Activated CD4-positive, alpha-beta T cell treated with anti-CD3 and anti-CD28 coated beads, Interleukin-2, amount 10 ng/mL, durations not matched to agents 24 days and 14 days (primary cell): ENCODE measurements at regions of chr18 and their contacts with region 1.

Region 1: DNA sequence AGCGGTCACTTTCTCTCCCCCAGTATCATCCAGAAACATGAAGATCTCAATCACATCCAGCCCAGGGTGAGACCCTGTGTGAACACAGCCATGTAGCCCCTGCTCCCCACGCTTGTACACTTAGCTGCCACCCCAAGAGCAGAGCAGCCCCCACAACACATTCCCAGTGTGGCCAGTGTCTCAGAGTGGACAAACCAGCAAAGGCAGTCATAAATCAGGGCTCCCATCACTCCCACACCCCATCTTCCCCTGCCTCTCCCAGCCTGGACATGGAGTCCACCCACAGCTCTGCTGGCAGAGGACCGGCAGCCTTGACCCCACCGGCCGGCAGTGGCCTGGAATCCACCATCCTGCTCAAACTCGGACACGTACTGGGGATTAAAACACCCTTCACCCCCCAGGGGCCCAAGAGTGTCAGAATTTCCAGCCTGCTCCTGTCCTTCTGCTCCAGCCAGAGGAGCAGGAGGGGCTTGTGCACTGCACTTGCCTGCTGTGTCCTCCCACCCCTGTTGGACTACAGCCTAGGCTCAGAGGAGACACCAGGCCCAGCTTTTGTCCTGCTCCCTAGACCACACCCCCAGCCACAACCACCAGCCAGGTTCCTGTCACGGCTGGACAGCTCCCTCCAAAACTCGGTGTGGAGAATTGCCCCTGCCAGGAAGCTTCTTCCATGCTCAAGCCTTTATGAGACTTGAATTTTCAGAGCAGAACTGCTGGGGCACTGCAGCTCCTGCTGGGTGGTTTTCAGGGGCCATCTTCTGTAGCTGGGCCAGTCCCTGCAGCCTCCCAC is 206.1 kb downstream of the SMAD2 start:
- DNase-seq: no peak
- H3K4me3 Mint-ChIP-seq: no peak overlapping the region
- H3K27ac Mint-ChIP-seq: no peak overlapping the region
- H3K4me1 Mint-ChIP-seq: no peaks in the 10 kb centered on the region
- H3K27me3 Mint-ChIP-seq: no peaks in the 10 kb centered on the region

Region 2: DNA sequence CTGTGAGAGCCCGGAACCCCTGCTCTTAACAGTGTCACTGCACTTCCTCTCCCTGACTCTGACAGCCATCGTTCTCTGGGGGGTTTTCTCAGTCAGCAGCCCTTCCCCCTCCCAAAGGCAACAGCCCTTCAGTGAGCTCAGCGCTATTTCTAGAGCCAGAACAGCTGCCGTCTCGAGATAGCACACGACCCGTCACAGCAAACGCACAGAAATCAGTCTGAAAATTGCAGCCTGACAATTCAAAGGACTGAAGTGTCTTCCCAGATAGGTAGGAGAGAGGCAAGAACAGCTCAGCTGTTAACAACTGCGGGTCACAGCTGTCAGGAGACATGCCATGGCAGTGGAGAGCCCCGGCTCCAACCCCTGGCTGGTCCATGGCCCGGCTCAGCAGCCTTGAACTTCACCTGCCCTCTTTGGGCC is 1012.9 kb before region 1 on chr18:
- intact Hi-C with region 1: loop called (anchors 10 kb)
- DNase-seq: no peak
- H3K4me3 Mint-ChIP-seq: no peak overlapping the region
- H3K27ac Mint-ChIP-seq: no peak overlapping the region
- H3K4me1 Mint-ChIP-seq: no peaks in the 10 kb centered on the region
- H3K27me3 Mint-ChIP-seq: peaks cover 2% of the 10 kb centered on the region